ENCODE measurements at regions of chr7 and their contacts with region 1.

Region 1: GRCh38 chr7:37181550-37181932 is 267.1 kb downstream of the ELMO1 start:
- DNase-seq: no peak
- ATAC-seq: no peak
- H3K4me3 ChIP-seq: no peak overlapping the region
- H3K4me1 ChIP-seq: no peaks in the 10 kb centered on the region
- CTCF ChIP-seq: no peak

Region 2: GRCh38 chr7:36473454-36474282 is 707.9 kb before region 1 on chr7:
- intact Hi-C with region 1: loop called in 1 of 2 experiments (anchors 10 kb)
- DNase-seq: peak in 2 of 3 donors; percentile 74 to 86
- ATAC-seq: peak; percentile 71
- H3K4me3 ChIP-seq: no peak overlapping the region
- H3K4me1 ChIP-seq: no peaks in the 10 kb centered on the region
- CTCF ChIP-seq: peak; percentile 31

Region 3: DNA sequence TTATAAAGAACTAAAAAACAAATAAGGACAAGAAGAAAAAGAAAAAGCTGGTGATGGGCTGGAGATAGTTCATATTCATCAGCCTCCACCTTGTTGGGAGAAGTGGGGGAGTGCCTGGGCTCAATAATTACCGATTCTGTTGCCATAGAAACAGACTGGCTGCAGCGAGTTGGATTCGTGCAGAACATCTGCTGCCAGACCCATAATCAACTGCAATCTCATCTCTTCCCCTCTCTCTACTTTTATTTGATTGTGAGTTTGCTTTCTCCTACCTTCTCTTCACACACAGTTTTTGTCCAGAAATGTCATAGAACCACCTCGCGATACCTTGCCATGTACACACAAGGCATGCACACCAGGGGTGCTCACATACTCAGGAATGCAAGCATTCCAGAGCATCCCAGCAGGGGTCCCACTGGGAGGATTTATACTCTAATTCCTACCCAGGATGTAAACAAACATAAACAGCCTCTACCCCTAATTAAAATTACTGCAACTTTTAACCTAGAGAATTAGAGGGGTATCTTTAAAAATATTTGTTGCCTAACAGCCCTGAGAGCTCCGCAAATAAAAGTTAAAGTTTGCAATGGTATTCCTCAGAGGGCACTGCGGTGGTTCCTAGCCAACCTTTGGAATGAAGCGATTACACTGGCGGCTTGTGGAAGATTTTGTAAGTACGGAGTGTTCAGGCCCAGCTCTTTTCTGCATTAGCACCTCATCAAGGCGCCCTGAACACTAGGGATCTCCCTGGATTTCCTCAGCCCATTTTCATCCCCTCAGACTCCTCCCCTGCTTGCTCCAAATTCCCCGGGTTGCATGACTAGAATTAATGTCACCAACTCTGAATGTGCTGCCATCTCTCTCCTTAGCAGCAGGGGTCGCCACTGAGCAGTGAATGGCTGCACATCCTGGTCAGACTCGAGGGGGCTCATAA is 194.8 kb before region 1 on chr7:
- intact Hi-C with region 1: loop called in 1 of 2 experiments (anchors 5 kb)
- DNase-seq: peak in 2 of 3 donors; percentile 54 to 75
- ATAC-seq: peak; percentile 73
- H3K4me3 ChIP-seq: no peak overlapping the region
- H3K4me1 ChIP-seq: no peaks in the 10 kb centered on the region
- CTCF ChIP-seq: peak; percentile 64

Region 4: DNA sequence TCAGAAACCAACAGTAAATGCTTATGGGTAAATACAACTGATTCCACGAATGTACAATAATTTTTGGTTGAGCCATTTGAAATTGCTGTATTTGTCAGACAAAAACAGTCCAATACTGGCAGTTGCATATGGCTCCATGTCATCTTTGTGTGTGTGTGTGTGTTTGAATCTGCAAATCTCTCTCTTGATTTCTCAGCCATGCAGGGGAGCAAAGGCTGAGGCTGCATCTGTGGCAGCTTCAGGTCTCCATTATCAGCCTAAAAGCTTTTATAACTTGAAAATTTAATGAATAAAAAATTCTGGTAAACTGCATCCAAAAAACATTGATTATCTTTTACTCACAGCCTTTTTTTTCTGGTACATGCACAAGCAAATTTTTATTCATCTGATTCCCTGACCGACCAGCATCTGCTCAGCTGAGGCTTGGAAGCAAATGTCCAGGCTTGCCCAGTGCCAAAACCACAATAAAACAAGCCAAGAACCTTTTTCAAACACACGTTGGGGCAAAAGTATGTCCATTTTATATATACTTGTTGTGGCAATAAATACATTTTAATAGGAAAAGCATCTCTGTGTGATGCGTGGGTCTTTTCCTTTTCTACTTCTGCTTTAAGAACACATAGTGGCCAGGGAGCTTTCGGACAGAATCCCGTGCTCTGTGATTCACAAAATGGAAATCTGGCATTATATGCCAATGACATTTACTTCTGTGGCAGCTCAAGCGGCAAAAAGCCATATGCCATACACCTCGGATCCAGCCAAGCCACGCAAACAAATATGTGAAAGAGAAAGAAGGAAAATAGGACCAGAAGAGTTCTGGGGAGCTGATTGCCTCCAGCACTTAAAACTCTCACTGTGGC is 181.7 kb before region 1 on chr7:
- intact Hi-C with region 1: no loop called
- DNase-seq: no peak
- ATAC-seq: no peak
- H3K4me3 ChIP-seq: no peak overlapping the region
- H3K4me1 ChIP-seq: no peaks in the 10 kb centered on the region
- CTCF ChIP-seq: no peak

Measured in mucosa of descending colon (tissue), 3 donors.